ENCODE measurements at regions of chr11 and their contacts with region 1.

Region 1: GRCh38 chr11:9534791-9535781 is 38.4 kb upstream of the WEE1 start:
- DNase-seq: peak; percentile 84
- ATAC-seq: peak; percentile 72
- H3K4me3 Mint-ChIP-seq: no peak overlapping the region
- H3K27ac Mint-ChIP-seq: no peak overlapping the region
- H3K4me1 Mint-ChIP-seq: peaks cover 5% of the 10 kb centered on the region
- H3K27me3 Mint-ChIP-seq: no peaks in the 10 kb centered on the region

Region 2: GRCh38 chr11:9516113-9516512 is 19.0 kb before region 1 on chr11:
- CTCF ChIA-PET with region 1: interaction called, 10 read pairs
- POLR2A ChIA-PET with region 1: no interaction called
- DNase-seq: no peak
- ATAC-seq: peak; percentile 61
- H3K4me3 Mint-ChIP-seq: no peak overlapping the region
- H3K27ac Mint-ChIP-seq: no peak overlapping the region
- H3K4me1 Mint-ChIP-seq: peaks cover under 1% of the 10 kb centered on the region
- H3K27me3 Mint-ChIP-seq: no peaks in the 10 kb centered on the region

Region 3: GRCh38 chr11:9565822-9566560 is 30.9 kb after region 1 on chr11:
- CTCF ChIA-PET with region 1: interaction called, 12 read pairs
- POLR2A ChIA-PET with region 1: no interaction called
- DNase-seq: peak; percentile 57
- ATAC-seq: peak; percentile 92
- H3K4me3 Mint-ChIP-seq: no peak overlapping the region
- H3K27ac Mint-ChIP-seq: peak overlapping the region; percentile 54
- H3K4me1 Mint-ChIP-seq: peaks cover 22% of the 10 kb centered on the region
- H3K27me3 Mint-ChIP-seq: peaks cover 9% of the 10 kb centered on the region

Region 4: DNA sequence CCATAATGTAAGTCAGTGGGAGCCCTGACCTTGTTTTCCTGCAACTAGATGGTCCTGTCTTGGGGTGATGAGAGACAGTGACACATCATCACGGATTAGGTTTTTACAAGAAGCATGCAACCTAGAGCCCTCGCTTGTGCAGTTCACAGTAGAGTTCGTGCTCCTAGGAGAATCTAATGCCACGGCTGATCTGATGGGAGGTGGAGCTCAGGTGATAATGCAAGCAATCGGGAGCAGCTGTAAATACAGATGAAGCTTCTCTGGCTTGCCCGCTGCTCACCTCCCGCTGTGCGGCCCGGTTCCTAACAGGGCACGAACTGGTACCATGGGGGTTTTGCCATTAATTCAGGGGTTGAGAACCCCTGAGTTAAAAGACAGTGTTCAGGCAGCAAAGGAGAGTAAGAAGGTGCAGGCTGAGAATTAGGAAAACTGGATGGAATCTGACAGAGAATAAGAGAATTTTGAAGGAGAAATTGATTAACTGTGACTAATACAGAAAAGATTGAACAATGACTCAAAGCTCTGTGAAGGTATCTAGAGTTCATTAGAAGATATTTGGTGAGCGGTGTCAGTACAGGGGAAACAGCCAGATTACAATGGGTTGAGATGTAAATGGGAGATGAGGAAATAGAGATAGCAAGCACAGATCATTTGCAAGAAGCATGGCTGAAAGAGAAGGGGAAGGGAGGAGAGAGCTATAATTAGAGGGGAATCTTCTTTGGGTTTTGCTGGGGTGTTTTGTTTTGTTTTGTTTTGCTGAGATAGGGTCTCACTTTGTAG is 59.4 kb after region 1 on chr11:
- CTCF ChIA-PET with region 1: interaction called, 17 read pairs
- POLR2A ChIA-PET with region 1: no interaction called
- DNase-seq: no peak
- ATAC-seq: no peak
- H3K4me3 Mint-ChIP-seq: no peak overlapping the region
- H3K27ac Mint-ChIP-seq: no peak overlapping the region
- H3K4me1 Mint-ChIP-seq: no peaks in the 10 kb centered on the region
- H3K27me3 Mint-ChIP-seq: peaks cover 9% of the 10 kb centered on the region

Region 5: GRCh38 chr11:9613118-9613829 is 78.2 kb after region 1 on chr11:
- CTCF ChIA-PET with region 1: interaction called, 68 read pairs
- POLR2A ChIA-PET with region 1: interaction called, 3 read pairs
- DNase-seq: peak; percentile 91
- ATAC-seq: peak; percentile 76
- H3K4me3 Mint-ChIP-seq: peak overlapping the region; percentile 82
- H3K27ac Mint-ChIP-seq: peak overlapping the region; percentile 94
- H3K4me1 Mint-ChIP-seq: peaks cover 27% of the 10 kb centered on the region
- H3K27me3 Mint-ChIP-seq: peaks cover 4% of the 10 kb centered on the region

Region 6: GRCh38 chr11:9851366-9851765 is 316.3 kb after region 1 on chr11:
- CTCF ChIA-PET with region 1: no interaction called
- POLR2A ChIA-PET with region 1: no interaction called
- DNase-seq: no peak
- ATAC-seq: no peak
- H3K4me3 Mint-ChIP-seq: no peak overlapping the region
- H3K27ac Mint-ChIP-seq: no peak overlapping the region
- H3K4me1 Mint-ChIP-seq: peaks cover 4% of the 10 kb centered on the region
- H3K27me3 Mint-ChIP-seq: no peaks in the 10 kb centered on the region